Gastrocnemius medialis (tissue), 4 donors: ENCODE measurements at regions of chr20 and their contacts with region 1.

Region 1: GRCh38 chr20:57879779-57880570 is 170.2 kb upstream of the PMEPA1 start:
- DNase-seq: no peak
- ATAC-seq: no peak
- H3K4me3 ChIP-seq: no peak overlapping the region
- H3K27ac ChIP-seq: peak overlapping the region in 1 of 4 donors; percentile 7
- H3K4me1 ChIP-seq: no peaks in the 10 kb centered on the region
- H3K27me3 ChIP-seq: no peaks in the 10 kb centered on the region
- CTCF ChIP-seq: no peak
- POLR2A ChIP-seq: no peak

Region 2: DNA sequence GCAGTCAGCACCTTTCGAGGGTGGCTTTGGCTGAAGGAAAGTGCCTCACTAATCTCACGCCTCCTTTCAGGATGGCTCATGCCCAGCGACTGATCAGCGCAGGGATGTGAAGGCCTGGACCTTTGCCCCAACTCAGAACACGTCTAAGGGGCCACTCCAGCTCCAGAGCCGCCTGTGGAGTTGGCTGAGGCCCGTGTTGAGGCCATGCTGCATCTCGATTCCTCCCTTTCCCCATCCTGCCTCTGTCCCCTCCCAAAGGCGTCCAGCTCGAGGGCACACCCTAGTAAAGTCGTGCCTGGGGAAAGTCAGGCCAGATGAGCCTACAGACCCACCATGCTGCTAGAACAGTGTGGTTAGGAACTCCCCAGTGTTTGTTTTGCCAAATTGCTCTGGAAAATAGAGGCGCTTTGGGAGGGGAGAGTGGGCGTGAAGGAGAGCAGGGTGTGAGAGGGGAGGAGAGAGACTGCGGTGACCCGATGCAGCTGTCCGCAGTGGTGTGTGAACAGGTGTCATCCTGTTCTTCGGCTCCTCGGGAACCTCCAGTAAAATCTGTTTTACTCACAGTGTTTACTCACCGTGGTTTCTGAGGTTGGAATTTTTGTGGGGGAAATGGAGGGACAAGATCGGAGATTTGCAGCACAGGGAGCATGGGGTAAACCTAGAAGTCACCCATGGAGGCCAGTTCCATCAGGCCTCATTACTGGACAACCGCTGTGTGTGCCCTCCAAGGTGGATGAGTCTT is 85.2 kb before region 1 on chr20:
- in situ Hi-C with region 1: loop called in 1 of 4 experiments (anchors 25 kb)
- intact Hi-C with region 1: no loop called
- DNase-seq: no peak
- ATAC-seq: no peak
- H3K4me3 ChIP-seq: no peak overlapping the region
- H3K27ac ChIP-seq: no peak overlapping the region
- H3K4me1 ChIP-seq: no peaks in the 10 kb centered on the region
- H3K27me3 ChIP-seq: no peaks in the 10 kb centered on the region
- CTCF ChIP-seq: no peak
- POLR2A ChIP-seq: no peak

Region 3: GRCh38 chr20:57849121-57849520 is 30.9 kb before region 1 on chr20:
- in situ Hi-C with region 1: no loop called
- intact Hi-C with region 1: no loop called
- DNase-seq: no peak
- ATAC-seq: no peak
- H3K4me3 ChIP-seq: no peak overlapping the region
- H3K27ac ChIP-seq: no peak overlapping the region
- H3K4me1 ChIP-seq: no peaks in the 10 kb centered on the region
- H3K27me3 ChIP-seq: no peaks in the 10 kb centered on the region
- CTCF ChIP-seq: no peak
- POLR2A ChIP-seq: no peak

Region 4: DNA sequence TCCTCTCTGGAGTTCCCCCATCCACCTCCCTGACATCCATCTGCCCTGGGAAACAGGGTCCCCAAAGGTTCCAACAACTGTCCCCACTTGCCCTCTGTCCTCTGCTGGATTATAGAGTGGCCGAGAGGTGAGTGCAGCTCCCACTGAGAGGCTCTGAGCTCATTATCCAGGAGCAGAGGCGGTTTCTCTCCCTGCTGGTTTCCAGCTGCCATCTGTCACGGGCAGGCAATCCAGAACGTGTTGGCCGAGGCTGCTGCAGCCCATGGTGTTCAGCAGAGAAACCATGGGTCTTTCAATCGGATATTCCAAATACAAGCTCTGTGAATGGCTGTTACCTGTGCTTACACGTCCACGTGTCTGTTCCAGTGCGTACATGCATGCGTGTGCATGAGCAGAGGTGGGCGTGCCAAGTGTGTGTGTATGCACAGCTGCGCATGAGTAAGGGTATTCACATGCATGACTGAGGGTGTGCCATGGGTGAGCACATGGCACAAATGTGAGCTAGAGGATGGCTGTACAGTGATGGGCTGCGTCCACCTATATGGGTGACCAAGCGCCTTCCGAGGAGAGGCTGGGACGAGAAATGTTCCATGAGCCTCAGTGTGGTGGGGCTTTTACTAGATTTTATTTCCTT is 13.5 kb after region 1 on chr20:
- in situ Hi-C with region 1: no loop called
- intact Hi-C with region 1: no loop called
- DNase-seq: no peak
- ATAC-seq: no peak
- H3K4me3 ChIP-seq: no peak overlapping the region
- H3K27ac ChIP-seq: no peak overlapping the region
- H3K4me1 ChIP-seq: no peaks in the 10 kb centered on the region
- H3K27me3 ChIP-seq: no peaks in the 10 kb centered on the region
- CTCF ChIP-seq: no peak
- POLR2A ChIP-seq: no peak

Region 5: DNA sequence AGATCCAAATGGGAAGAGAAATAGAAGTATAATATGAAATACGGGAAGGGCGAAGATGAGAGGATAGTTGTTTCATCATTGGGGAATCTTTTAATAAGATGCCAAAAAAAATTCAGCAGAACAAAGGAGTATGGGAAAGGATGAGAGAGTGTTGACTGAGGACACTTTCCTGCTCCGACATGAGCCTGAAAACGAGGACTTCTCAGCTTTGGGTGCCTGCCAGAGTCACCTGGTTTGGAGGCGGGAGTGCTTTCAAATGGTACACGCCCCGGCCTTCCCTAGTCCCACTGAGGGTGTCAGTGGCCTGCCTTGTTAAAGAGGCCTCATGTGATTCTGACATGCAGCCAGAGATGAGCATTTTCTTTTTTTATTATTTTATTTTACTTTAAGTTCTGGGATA is 97.6 kb after region 1 on chr20:
- in situ Hi-C with region 1: no loop called
- intact Hi-C with region 1: no loop called
- DNase-seq: no peak
- ATAC-seq: no peak
- H3K4me3 ChIP-seq: no peak overlapping the region
- H3K27ac ChIP-seq: peak overlapping the region in 1 of 4 donors; percentile 14
- H3K4me1 ChIP-seq: no peaks in the 10 kb centered on the region
- H3K27me3 ChIP-seq: no peaks in the 10 kb centered on the region
- CTCF ChIP-seq: no peak
- POLR2A ChIP-seq: no peak